Activated CD4-positive, alpha-beta T cell treated with anti-CD3 and anti-CD28 coated beads, Interleukin-2, amount 10 ng/mL, durations not matched to agents 24 days and 14 days (primary cell): ENCODE measurements at regions of chr9 and their contacts with region 1.

Region 1: GRCh38 chr9:22307013-22307711 is 139.5 kb upstream of the DMRTA1 start:
- DNase-seq: no peak
- H3K4me3 Mint-ChIP-seq: no peak overlapping the region
- H3K27ac Mint-ChIP-seq: no peak overlapping the region
- H3K4me1 Mint-ChIP-seq: no peaks in the 10 kb centered on the region
- H3K27me3 Mint-ChIP-seq: peaks cover 2% of the 10 kb centered on the region

Region 2: DNA sequence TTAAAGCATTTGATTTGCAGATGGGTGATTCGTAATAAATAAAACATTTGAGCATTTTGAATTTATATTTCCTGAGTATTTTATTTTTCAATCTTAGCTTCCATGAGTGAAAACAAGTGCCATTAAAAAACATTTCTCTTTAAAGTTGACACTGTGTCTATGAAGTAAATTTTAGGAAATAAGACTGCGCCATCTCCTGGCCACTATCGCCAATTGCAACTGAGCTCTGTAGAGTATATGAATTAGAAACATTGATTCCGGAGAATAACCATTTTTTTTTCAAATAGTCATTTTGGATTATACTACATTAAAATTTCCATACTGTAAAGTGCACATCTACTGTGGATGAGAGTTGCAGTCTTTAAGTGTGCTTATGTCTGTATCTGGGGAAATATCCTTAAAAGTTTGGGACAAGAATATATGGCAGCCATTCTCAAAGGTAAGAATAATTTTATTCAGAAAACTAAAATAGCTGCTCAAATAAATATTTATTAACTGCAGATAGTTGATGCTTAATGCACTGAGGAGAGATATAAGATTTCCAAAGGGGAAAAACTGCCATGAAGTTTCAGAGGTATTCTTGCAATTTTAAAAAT is 145.4 kb after region 1 on chr9:
- intact Hi-C with region 1: loop called (anchors 2 kb)
- DNase-seq: peak; percentile 79
- H3K4me3 Mint-ChIP-seq: no peak overlapping the region
- H3K27ac Mint-ChIP-seq: no peak overlapping the region
- H3K4me1 Mint-ChIP-seq: no peaks in the 10 kb centered on the region
- H3K27me3 Mint-ChIP-seq: peaks cover 25% of the 10 kb centered on the region